ENCODE measurements at regions of chr15 and their contacts with region 1.

Region 1: DNA sequence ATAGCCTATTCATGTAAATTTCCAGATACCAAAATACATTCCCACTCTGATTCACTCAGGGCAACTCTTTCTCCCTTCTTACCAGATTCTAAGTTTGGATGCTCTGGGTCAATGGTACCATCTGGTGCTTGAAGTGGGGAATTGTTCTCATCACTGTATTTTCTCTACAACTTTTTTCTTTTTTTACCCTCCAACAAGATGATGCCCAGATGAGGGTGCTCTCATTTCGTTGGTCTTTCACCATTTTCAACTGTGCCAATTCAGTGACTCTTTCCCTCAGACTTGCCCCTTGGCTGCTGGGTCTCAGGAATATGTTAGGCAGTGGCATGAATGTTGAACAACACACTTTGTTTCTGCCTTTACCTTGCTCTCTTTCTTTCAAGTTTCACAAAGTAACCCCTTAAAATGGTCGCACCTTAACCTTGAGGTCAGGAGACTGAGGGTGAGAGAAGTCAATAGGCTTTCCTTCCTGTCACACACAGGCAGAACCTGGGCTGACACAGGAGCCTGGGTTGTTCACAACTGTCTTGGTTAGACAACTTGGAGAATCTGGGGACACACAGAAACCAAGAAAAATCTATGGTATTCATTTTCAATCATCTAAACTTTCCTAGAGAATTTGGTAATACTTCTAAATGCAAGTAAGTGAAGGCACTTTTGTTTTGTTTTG is 330.7 kb upstream of the SLCO3A1 start:
- DNase-seq: no peak
- ATAC-seq: peak; percentile 85 to 97 (median 94)
- H3K4me3 ChIP-seq: no peak overlapping the region
- H3K27ac ChIP-seq: no peak overlapping the region
- H3K4me1 ChIP-seq: peaks cover 0 to 5% (median 2%) of the 10 kb centered on the region in 4 donors
- H3K27me3 ChIP-seq: no peaks in the 10 kb centered on the region
- CTCF ChIP-seq: peak; percentile 55 to 74 (median 66)
- POLR2A ChIP-seq: no peak

Region 2: DNA sequence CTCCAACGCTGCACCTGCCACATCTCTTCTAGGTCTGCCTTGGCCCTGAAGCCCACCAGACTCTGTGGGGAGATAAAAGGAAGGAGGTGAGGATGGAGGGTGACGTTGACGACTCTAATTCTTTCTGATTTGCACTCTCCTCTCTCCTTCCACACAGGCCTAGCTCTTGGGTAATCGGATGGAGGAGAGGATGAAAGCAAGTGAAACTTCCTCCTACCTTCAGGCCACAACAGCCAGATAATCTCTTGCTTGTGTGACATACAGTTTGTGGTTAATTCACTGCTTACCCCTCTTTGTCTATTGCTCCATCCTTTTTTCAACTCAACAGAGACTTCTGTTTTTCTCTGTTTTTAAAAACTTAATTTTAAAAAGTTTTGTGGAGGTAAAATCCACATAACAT is 214.6 kb before region 1 on chr15:
- intact Hi-C with region 1: loop called (anchors 5 to 10 kb)
- DNase-seq: no peak
- ATAC-seq: no peak
- H3K4me3 ChIP-seq: no peak overlapping the region
- H3K27ac ChIP-seq: no peak overlapping the region
- H3K4me1 ChIP-seq: peaks cover 0 to 3% (median under 1%) of the 10 kb centered on the region in 4 donors
- H3K27me3 ChIP-seq: no peaks in the 10 kb centered on the region
- CTCF ChIP-seq: no peak
- POLR2A ChIP-seq: no peak

Region 3: DNA sequence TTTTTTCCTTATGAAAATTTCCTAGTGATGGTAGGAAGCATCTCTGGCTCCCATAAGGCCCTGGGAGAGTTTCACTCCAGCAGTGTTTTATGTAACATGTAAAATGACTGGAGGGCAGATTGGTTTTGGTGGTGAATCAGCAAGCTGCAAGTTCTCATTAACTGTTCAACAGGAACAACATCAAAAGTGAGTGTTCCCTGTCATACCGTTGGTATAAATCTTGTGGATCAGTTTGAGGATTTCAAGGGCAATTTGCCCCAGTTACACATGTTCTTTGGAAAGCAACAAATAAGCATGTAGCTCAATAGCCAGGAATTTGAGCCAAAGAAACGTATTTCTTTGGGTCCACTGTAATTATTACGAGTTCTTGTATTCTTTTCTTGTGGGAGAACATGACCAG is 77.0 kb before region 1 on chr15:
- intact Hi-C with region 1: no loop called
- DNase-seq: no peak
- ATAC-seq: no peak
- H3K4me3 ChIP-seq: no peak overlapping the region
- H3K27ac ChIP-seq: no peak overlapping the region
- H3K4me1 ChIP-seq: no peaks in the 10 kb centered on the region
- H3K27me3 ChIP-seq: no peaks in the 10 kb centered on the region
- CTCF ChIP-seq: no peak
- POLR2A ChIP-seq: no peak

Measured in right lobe of liver (tissue), 6 donors.